ENCODE measurements at regions of chr12 and their contacts with region 1.

Region 1: GRCh38 chr12:26853303-26854030 is 20.5 kb upstream of the ITPR2 start:
- DNase-seq: peak; percentile 39
- H3K4me3 ChIP-seq: no peak overlapping the region
- H3K27ac ChIP-seq: no peak overlapping the region
- H3K4me1 ChIP-seq: no peaks in the 10 kb centered on the region
- H3K27me3 ChIP-seq: no peaks in the 10 kb centered on the region
- CTCF ChIP-seq: peak; percentile 84 to 96

Region 2: GRCh38 chr12:26493656-26494055 is 359.8 kb before region 1 on chr12:
- CTCF ChIA-PET with region 1: no interaction called
- dilution Hi-C with region 1: no loop called
- in situ Hi-C with region 1: no loop called
- intact Hi-C with region 1: no loop called
- DNase-seq: peak; percentile 68
- H3K4me3 ChIP-seq: no peak overlapping the region
- H3K27ac ChIP-seq: peak overlapping the region; percentile 41
- H3K4me1 ChIP-seq: peaks cover 24% of the 10 kb centered on the region
- H3K27me3 ChIP-seq: no peaks in the 10 kb centered on the region
- CTCF ChIP-seq: no peak

Region 3: GRCh38 chr12:26884765-26885576 is 31.5 kb after region 1 on chr12:
- CTCF ChIA-PET with region 1: no interaction called
- dilution Hi-C with region 1: no loop called
- in situ Hi-C with region 1: no loop called
- intact Hi-C with region 1: loop called (anchors 1 kb)
- DNase-seq: peak; percentile 75
- H3K4me3 ChIP-seq: no peak overlapping the region
- H3K27ac ChIP-seq: no peak overlapping the region
- H3K4me1 ChIP-seq: peaks cover 3% of the 10 kb centered on the region
- H3K27me3 ChIP-seq: no peaks in the 10 kb centered on the region
- CTCF ChIP-seq: peak; percentile 95 to 97

Region 4: DNA sequence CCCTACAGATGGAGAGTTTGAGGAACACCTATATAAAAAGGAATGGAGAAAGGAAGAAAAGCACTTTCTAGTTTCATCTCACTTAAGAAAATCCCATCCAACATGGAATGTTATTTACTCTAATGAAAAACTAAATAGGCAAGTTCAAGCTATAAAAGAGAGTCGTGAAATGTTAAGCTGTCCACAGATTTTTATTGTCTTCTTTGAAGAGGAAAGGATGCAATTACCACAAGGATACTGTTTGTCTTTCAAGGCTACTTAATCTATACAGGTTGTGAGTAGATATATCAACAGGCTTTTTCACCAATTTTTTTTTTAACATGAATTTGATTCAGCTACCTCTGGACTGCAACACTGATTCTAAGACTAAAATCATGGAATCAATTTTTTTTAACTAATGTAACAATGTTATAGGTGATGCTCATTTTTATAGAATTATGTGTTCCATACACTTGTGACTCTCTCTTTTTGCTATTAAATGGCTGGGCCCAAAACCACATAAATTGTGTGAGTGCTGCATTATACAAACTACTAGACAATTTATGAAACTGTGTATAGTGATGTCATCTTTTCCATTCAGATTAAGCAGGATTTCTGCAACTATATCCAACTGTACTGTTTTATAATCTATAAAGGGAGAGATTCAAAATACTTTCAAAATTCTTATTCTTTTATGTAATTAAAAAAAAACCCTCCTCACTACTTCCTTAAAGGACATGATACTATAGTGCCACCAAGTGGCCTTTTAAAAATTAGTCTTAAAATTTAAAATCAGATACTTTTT is 452.4 kb after region 1 on chr12:
- CTCF ChIA-PET with region 1: no interaction called
- dilution Hi-C with region 1: no loop called
- in situ Hi-C with region 1: no loop called
- intact Hi-C with region 1: loop called (anchors 10 kb)
- DNase-seq: no peak
- H3K4me3 ChIP-seq: no peak overlapping the region
- H3K27ac ChIP-seq: no peak overlapping the region
- H3K4me1 ChIP-seq: no peaks in the 10 kb centered on the region
- H3K27me3 ChIP-seq: no peaks in the 10 kb centered on the region
- CTCF ChIP-seq: peak; percentile 37 to 45

Measured in mammary epithelial cell (primary cell).